IMR-90 (cell line): ENCODE measurements at regions of chr2 and their contacts with region 1.

Region 1: GRCh38 chr2:166926657-166927056 is 38.4 kb downstream of the XIRP2 start:
- DNase-seq: peak; percentile 78
- ATAC-seq: peak; percentile 79
- H3K4me3 ChIP-seq: no peak overlapping the region
- H3K27ac ChIP-seq: no peak overlapping the region
- H3K4me1 ChIP-seq: no peaks in the 10 kb centered on the region
- H3K27me3 ChIP-seq: no peaks in the 10 kb centered on the region
- CTCF ChIP-seq: no peak
- POLR2A ChIP-seq: no peak
- RAD21 ChIP-seq: no peak

Region 2: GRCh38 chr2:166900700-166901099 is 26.0 kb before region 1 on chr2:
- CTCF ChIA-PET with region 1: no interaction called
- POLR2A ChIA-PET with region 1: no interaction called
- dilution Hi-C with region 1: no loop called
- in situ Hi-C with region 1: no loop called
- intact Hi-C with region 1: loop called (anchors 2 kb)
- DNase-seq: peak; percentile 29
- ATAC-seq: no peak
- H3K4me3 ChIP-seq: no peak overlapping the region
- H3K27ac ChIP-seq: no peak overlapping the region
- H3K4me1 ChIP-seq: no peaks in the 10 kb centered on the region
- H3K27me3 ChIP-seq: no peaks in the 10 kb centered on the region
- CTCF ChIP-seq: peak; percentile 24; the same call in 1 of the 2 replicates
- POLR2A ChIP-seq: no peak
- RAD21 ChIP-seq: peak; percentile 42

Region 3: DNA sequence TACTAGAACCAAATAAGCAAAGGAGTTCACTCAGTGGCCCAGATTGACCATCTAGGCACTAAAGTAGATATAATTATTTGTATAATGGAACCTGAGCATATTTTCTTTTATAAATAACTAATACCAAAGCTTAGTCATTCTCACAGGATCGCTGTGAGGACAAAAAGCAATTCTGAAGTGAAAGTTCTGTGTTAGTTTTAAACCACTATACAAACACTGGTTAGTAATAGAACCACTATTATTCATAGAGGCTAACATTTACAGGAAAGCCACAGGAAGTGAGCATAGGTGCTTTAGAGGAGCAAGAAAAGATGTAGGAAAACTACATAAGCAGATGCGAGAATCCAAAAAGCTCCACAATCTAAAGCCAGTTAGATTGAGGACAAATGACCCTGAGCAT is 326.4 kb after region 1 on chr2:
- CTCF ChIA-PET with region 1: no interaction called
- POLR2A ChIA-PET with region 1: no interaction called
- dilution Hi-C with region 1: no loop called
- in situ Hi-C with region 1: no loop called
- intact Hi-C with region 1: no loop called
- DNase-seq: peak; percentile 64
- ATAC-seq: peak; percentile 83
- H3K4me3 ChIP-seq: no peak overlapping the region
- H3K27ac ChIP-seq: no peak overlapping the region
- H3K4me1 ChIP-seq: no peaks in the 10 kb centered on the region
- H3K27me3 ChIP-seq: no peaks in the 10 kb centered on the region; the same call in 1 of the 2 replicates
- CTCF ChIP-seq: no peak
- POLR2A ChIP-seq: no peak
- RAD21 ChIP-seq: no peak